Activated T-helper 1 cell treated with anti-CD3 and anti-CD28 coated beads, Interleukin-12 subunit alpha, Interleukin-12 subunit beta, Interleukin-2, Interleukin-4 antibody, amounts not matched to agents 30 ng/mL and 10 ng/mL and 1 ng/mL, durations not matched to agents 14 hours and 24 hours and 36 hours (primary cell): ENCODE measurements at regions of chr2 and their contacts with region 1.

Region 1: DNA sequence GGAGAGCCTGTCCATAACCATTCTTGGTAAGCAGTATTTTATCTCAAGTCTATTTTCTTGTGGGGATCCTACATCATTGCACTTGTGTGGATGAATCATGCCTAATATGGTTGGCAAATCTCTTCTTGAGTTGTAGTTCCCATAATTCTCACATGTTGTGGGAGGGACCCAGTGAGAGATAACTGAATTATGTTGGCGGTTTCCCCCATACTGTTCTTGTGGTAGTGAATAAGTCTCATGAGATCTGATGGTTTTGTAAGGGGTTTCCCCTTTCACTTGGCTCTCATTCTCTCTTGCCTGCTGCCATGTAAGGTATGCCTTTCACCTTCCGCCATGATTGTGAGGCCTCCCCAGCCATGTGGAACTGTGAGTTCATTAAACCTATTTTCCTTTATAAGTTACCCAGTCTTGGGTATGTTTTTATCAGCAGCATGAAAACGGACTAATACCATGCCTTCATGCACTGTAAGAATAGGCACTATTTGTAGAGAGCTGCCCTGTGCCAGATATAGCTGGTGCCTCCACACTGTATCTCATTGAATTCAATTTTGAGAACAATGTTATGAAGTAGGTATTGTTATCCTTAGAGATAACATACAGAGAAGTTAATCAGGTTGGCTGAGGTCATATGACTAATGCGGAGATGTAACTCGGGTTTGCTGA is 148.3 kb downstream of the PLCL1 start:
- DNase-seq: no peak
- H3K4me3 Mint-ChIP-seq: no peak overlapping the region
- H3K27ac Mint-ChIP-seq: no peak overlapping the region
- H3K4me1 Mint-ChIP-seq: peaks cover 9% of the 10 kb centered on the region
- H3K27me3 Mint-ChIP-seq: no peaks in the 10 kb centered on the region

Region 2: GRCh38 chr2:197904446-197904845 is 48.2 kb before region 1 on chr2:
- intact Hi-C with region 1: loop called (anchors 2 kb)
- DNase-seq: peak; percentile 6
- H3K4me3 Mint-ChIP-seq: no peak overlapping the region
- H3K27ac Mint-ChIP-seq: no peak overlapping the region
- H3K4me1 Mint-ChIP-seq: peaks cover 5% of the 10 kb centered on the region
- H3K27me3 Mint-ChIP-seq: peaks cover 35% of the 10 kb centered on the region

Region 3: GRCh38 chr2:197929008-197929885 is 23.4 kb before region 1 on chr2:
- intact Hi-C with region 1: no loop called
- DNase-seq: no peak
- H3K4me3 Mint-ChIP-seq: no peak overlapping the region
- H3K27ac Mint-ChIP-seq: no peak overlapping the region
- H3K4me1 Mint-ChIP-seq: peaks cover 6% of the 10 kb centered on the region
- H3K27me3 Mint-ChIP-seq: no peaks in the 10 kb centered on the region

Region 4: DNA sequence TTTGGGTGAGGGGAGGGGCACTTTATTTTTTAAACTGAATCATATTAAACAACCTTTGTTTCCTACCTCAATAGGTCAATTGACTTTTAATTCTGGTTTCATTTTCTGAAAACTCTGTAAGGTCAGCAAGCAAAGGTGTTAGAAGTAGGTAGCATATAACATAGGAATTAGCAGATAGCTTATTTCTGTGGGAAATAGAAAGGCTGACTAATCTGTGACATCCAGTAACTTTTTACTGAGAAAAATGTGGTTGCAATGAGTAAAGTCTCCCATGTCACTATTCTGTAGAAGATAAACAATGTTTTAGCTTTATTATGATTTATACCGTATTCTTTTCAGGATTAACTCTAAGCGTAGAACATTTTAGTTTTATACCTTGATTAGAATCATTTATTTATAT is 92.1 kb after region 1 on chr2:
- intact Hi-C with region 1: loop called (anchors 2 kb)
- DNase-seq: no peak
- H3K4me3 Mint-ChIP-seq: peak overlapping the region; percentile 19
- H3K27ac Mint-ChIP-seq: peak overlapping the region; percentile 76
- H3K4me1 Mint-ChIP-seq: peaks cover 14% of the 10 kb centered on the region
- H3K27me3 Mint-ChIP-seq: no peaks in the 10 kb centered on the region